CD14-positive monocyte (primary cell): ENCODE measurements at regions of chr3 and their contacts with region 1.

Region 1: DNA sequence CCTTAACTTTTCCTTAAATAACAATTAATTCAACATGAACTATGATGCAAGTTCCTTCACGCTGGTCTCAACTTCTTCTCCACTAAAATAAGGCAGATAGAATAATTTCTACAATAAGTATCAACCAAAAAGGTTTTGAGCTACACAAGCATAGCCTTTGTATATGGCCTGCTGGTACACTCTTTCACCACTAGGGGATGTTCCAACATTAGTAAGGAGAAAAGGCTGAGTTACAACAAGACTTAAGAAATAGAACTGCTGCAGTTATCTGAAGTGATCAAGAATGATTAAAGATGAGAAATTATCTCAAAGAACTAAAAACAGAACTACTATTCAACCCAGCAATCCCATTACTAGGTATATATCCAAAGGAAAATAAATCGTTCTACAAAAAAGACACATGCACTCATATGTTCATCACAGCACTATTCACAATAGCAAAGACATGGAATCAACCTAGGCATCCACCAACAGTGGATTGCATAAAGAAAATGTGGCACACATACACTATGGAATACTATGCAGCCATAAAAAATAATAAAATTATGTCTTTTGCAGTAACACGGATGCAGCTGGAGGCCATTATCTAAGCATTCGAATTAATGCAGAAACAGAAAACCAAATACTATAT is 14.4 kb downstream of the ATP13A3 start:
- DNase-seq: peak in 2 of 3 donors; percentile 67 to 73
- H3K4me3 ChIP-seq: no peak overlapping the region
- H3K4me3 Mint-ChIP-seq: no peak overlapping the region
- H3K27ac ChIP-seq: no peak overlapping the region
- H3K27ac Mint-ChIP-seq: peak overlapping the region in 2 of 7 donors; percentile 43 to 55
- H3K4me1 ChIP-seq: peaks cover 4 to 18% of the 10 kb centered on the region in 2 donors
- H3K4me1 Mint-ChIP-seq: peaks cover 13% of the 10 kb centered on the region
- H3K27me3 ChIP-seq: no peaks in the 10 kb centered on the region
- H3K27me3 Mint-ChIP-seq: no peaks in the 10 kb centered on the region
- CTCF ChIP-seq: peak; percentile 97

Region 2: GRCh38 chr3:194231929-194232842 is 240.2 kb before region 1 on chr3:
- intact Hi-C with region 1: no loop called
- DNase-seq: no peak
- H3K4me3 ChIP-seq: no peak overlapping the region
- H3K4me3 Mint-ChIP-seq: no peak overlapping the region
- H3K27ac ChIP-seq: no peak overlapping the region
- H3K27ac Mint-ChIP-seq: no peak overlapping the region
- H3K4me1 ChIP-seq: no peaks in the 10 kb centered on the region
- H3K4me1 Mint-ChIP-seq: no peaks in the 10 kb centered on the region
- H3K27me3 ChIP-seq: peaks cover 0 to 2% of the 10 kb centered on the region in 2 donors
- H3K27me3 Mint-ChIP-seq: peaks cover 7 to 11% (median 10%) of the 10 kb centered on the region in 3 donors
- CTCF ChIP-seq: no peak

Region 3: DNA sequence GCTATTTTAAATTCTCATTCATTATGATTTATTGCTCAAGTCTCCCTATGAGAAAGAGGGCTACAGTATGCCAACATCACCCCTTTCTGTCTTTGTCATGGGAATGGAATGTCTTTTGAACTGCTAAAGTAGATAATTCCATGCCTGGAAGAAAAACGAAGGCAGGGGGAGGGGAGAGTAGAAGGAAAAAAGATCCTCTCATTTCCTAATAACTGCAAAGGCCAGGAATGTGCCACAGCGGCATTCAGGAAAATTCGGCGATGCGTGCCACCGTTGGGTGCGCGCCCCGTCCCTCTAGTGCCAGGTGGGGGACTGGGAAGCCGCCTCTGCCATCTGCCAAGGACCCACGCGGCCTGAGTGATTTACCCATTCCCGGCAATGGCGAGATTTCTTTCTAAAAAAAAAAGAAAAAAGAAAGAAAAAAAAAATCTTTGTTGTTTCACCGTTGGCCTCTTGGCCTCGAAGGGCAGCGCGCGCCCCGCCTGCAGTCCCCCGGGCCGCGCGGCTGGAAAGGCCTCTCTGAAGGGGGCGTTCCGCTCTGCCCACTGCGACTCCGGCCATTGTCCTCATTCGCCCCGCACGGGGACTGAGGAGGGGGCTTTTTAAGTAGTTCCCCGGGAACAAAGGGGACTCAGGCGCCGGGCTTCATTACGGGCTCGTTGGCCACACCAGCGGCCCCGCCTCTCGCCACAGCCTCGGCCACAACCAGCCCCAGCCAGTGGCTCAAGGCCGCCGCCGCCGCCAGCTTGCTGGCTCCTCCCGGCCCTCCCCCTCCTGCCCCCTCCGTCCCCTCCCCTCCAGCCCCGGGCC is 175.7 kb before region 1 on chr3:
- intact Hi-C with region 1: no loop called
- DNase-seq: no peak
- H3K4me3 ChIP-seq: no peak overlapping the region
- H3K4me3 Mint-ChIP-seq: peak overlapping the region in 1 of 2 donors; percentile 48
- H3K27ac ChIP-seq: no peak overlapping the region
- H3K27ac Mint-ChIP-seq: no peak overlapping the region
- H3K4me1 ChIP-seq: no peaks in the 10 kb centered on the region
- H3K4me1 Mint-ChIP-seq: peaks cover 5% of the 10 kb centered on the region
- H3K27me3 ChIP-seq: peaks cover 0 to 20% of the 10 kb centered on the region in 2 donors
- H3K27me3 Mint-ChIP-seq: peaks cover 16 to 44% (median 28%) of the 10 kb centered on the region in 3 donors
- CTCF ChIP-seq: no peak

Region 4: GRCh38 chr3:194508491-194509453 is 36.4 kb after region 1 on chr3:
- intact Hi-C with region 1: no loop called
- DNase-seq: peak in 2 of 3 donors; percentile 41 to 57
- H3K4me3 ChIP-seq: peak overlapping the region in 1 of 3 experiments; percentile 44
- H3K4me3 Mint-ChIP-seq: peak overlapping the region; percentile 24 to 47
- H3K27ac ChIP-seq: peak overlapping the region; percentile 37 to 78
- H3K27ac Mint-ChIP-seq: peak overlapping the region; percentile 68 to 90 (median 85)
- H3K4me1 ChIP-seq: peaks cover 18 to 21% of the 10 kb centered on the region in 2 donors
- H3K4me1 Mint-ChIP-seq: peaks cover 21% of the 10 kb centered on the region
- H3K27me3 ChIP-seq: no peaks in the 10 kb centered on the region
- H3K27me3 Mint-ChIP-seq: peaks cover 0 to 6% (median 3%) of the 10 kb centered on the region in 3 donors
- CTCF ChIP-seq: no peak

Region 5: GRCh38 chr3:194573691-194574437 is 101.5 kb after region 1 on chr3:
- intact Hi-C with region 1: loop called (anchors 5 kb)
- DNase-seq: peak; percentile 36 to 71 (median 66)
- H3K4me3 ChIP-seq: no peak overlapping the region
- H3K4me3 Mint-ChIP-seq: no peak overlapping the region
- H3K27ac ChIP-seq: no peak overlapping the region
- H3K27ac Mint-ChIP-seq: peak overlapping the region in 2 of 7 donors; percentile 37 to 43
- H3K4me1 ChIP-seq: peaks cover 50 to 68% of the 10 kb centered on the region in 2 donors
- H3K4me1 Mint-ChIP-seq: peaks cover 72% of the 10 kb centered on the region
- H3K27me3 ChIP-seq: peaks cover 0 to 9% of the 10 kb centered on the region in 2 donors
- H3K27me3 Mint-ChIP-seq: peaks cover 15 to 20% (median 18%) of the 10 kb centered on the region in 3 donors
- CTCF ChIP-seq: peak; percentile 69

Region 6: DNA sequence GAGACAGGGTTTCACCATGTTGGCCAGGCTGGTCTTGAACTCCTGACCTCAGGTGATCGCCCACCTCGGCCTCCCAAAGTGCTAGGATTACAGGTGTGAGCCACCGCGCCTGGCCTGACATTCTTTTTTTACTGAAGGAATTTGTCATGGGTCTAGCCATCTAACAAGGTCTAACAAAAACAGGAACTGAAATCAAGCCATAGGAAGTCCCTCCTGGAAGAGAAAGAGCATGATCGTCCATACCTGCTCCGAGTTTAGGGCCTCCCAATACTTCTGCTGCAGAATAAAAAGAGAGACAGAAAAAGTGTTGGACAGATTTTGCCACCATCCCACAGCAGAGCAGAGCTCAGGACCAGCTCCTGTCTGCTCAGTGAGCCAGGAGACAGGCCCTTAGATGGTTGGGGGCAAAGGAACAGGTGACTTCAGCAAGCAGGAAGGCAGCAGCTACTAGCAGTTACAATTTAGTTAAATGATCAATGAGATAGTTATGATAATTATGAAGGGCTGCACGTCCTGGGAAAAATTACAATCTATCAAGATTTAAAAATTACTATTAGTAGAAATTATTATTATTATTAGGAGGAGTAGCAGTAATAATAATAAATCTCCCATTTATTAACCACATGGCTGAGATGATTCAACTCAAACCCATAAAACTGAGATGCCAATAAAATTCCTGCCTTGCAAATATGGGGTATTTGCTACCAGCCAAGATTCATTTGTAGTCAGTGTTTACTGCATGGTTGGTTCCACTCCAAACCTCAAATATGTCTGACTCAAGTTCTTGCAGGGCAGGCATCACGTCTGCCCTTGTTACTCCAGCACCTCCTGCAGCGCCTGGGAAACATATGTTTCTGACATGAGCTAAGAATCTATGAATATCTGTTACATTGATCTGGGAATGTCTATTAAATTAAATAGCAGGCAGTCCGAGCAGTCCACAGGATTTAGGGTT is 120.7 kb after region 1 on chr3:
- intact Hi-C with region 1: loop called in 1 of 2 experiments (anchors 5 kb)
- DNase-seq: peak in 2 of 3 donors; percentile 65 to 69
- H3K4me3 ChIP-seq: no peak overlapping the region
- H3K4me3 Mint-ChIP-seq: peak overlapping the region in 1 of 2 donors; percentile 5
- H3K27ac ChIP-seq: no peak overlapping the region
- H3K27ac Mint-ChIP-seq: peak overlapping the region in 5 of 7 donors; percentile 38 to 84 (median 70)
- H3K4me1 ChIP-seq: peaks cover 10 to 15% of the 10 kb centered on the region in 2 donors
- H3K4me1 Mint-ChIP-seq: peaks cover 12% of the 10 kb centered on the region
- H3K27me3 ChIP-seq: no peaks in the 10 kb centered on the region
- H3K27me3 Mint-ChIP-seq: peaks cover 0 to 3% (median 0%) of the 10 kb centered on the region in 3 donors
- CTCF ChIP-seq: no peak